Left cardiac atrium (tissue), 4 donors: ENCODE measurements at regions of chr3 and their contacts with region 1.

Region 1: GRCh38 chr3:192835818-192836468 is 81.7 kb downstream of the MB21D2 start:
- DNase-seq: peak; percentile 41
- ATAC-seq: peak; percentile 27 to 62

Region 2: DNA sequence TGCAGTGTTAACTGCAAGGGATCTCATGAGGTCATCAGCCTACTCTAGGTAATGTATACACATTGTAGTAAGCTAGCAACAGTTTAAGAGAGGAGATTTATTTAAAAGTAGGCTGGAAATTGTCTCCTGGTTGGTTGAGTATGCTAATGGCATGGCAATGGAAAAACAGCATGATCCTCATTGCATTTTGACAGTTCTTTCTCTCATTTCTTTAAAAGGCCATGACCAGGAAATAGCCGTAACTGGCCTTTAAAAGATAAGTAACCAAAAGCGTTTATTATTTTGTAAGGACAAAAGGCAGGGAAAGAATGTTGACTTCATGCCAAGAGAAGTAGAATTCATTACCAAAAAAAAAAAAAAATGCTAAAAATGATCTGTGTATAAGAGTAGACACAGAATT is 418.9 kb before region 1 on chr3:
- intact Hi-C with region 1: no loop called
- DNase-seq: no peak
- ATAC-seq: no peak

Region 3: GRCh38 chr3:192917404-192918274 is 81.7 kb after region 1 on chr3 and contains the start of gene MB21D2:
- intact Hi-C with region 1: loop called in 1 of 2 experiments (anchors 5 kb)
- DNase-seq: peak; percentile 88
- ATAC-seq: peak; percentile 89 to 95
- total RNA-seq, gene MB21D2: 2.2 to 4.1 TPM